Vagina (tissue), 2 donors: ENCODE measurements at regions of chr11 and their contacts with region 1.

Region 1: GRCh38 chr11:72831513-72832300 is 17.5 kb downstream of the ATG16L2 start:
- DNase-seq: peak in 1 of 2 donors; percentile 81
- H3K4me3 ChIP-seq: no peak overlapping the region
- H3K27ac ChIP-seq: peak overlapping the region; percentile 8
- H3K4me1 ChIP-seq: peaks cover 36% of the 10 kb centered on the region
- H3K27me3 ChIP-seq: no peaks in the 10 kb centered on the region
- CTCF ChIP-seq: peak; percentile 90 to 95 (median 94)
- POLR2A ChIP-seq: no peak

Region 2: DNA sequence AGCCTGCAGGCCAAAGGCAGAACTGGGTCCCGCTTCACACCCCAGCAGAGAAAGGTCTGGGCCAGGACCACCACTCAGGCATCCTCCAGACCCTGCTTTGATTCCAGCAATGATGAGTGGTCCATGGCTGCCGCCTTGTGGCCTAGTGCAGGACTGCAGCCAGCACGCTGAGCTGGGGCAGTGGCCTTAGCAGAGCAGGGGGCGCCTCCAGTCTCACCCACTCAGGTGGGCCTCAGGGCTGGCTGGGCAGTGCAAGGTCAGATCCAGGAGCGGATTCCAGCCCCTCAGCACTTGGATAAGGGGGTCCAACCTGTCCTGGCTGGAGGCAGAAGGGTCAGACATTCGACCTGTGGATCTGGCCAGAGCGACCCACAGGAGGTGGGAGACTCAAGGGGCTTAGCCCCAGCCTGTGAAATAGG is 147.9 kb before region 1 on chr11:
- intact Hi-C with region 1: no loop called
- DNase-seq: no peak
- H3K4me3 ChIP-seq: no peak overlapping the region
- H3K27ac ChIP-seq: peak overlapping the region; percentile 73
- H3K4me1 ChIP-seq: peaks cover 51% of the 10 kb centered on the region
- H3K27me3 ChIP-seq: no peaks in the 10 kb centered on the region
- CTCF ChIP-seq: peak; percentile 79 to 89 (median 88)
- POLR2A ChIP-seq: no peak

Region 3: GRCh38 chr11:73141848-73142286 is 310.2 kb after region 1 on chr11:
- intact Hi-C with region 1: loop called (anchors 10 kb)
- DNase-seq: no peak
- H3K4me3 ChIP-seq: peak overlapping the region; percentile 79 to 94
- H3K27ac ChIP-seq: peak overlapping the region; percentile 97
- H3K4me1 ChIP-seq: peaks cover 24% of the 10 kb centered on the region
- H3K27me3 ChIP-seq: no peaks in the 10 kb centered on the region
- CTCF ChIP-seq: no peak
- POLR2A ChIP-seq: peak in 1 of 2 donors; percentile 19

Region 4: DNA sequence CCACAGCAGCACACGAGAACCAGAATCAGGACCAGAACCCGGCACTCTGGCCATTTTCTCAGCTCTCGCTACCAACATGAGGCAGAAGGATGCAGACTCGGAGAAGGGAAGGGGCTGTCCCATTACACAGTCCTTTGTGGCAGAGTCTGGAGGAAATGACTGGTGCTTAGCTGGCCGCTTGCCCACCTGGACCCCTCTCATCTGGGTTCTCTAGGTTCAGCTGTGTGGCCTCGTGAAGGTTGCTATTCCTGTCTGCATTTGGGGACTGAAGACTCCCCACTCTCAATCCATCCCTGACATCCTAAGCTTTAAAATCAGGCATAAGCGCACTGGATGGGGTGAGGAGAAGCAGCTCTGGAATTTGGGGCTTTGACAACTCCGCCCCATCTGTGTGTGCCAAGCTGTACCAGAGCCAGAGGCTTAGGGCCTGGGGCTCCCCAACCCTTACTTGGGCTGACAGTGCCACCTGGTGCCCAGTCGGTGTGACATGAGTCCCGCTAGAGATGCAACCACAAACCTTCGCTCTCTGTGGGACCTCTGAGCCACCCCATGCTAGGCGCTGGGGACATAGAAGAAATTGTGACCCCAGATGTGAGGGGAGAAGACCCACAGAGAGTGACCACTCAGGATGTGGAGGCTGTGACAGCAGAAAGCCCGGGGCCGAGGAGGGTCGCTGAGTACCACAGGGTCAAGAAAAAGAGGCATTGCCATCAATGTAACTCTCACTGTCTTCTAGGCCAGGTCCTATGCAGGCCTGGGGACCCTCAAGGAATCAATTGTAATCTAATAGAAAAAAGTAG is 346.3 kb after region 1 on chr11:
- intact Hi-C with region 1: loop called (anchors 5 kb)
- DNase-seq: no peak
- H3K4me3 ChIP-seq: no peak overlapping the region
- H3K27ac ChIP-seq: peak overlapping the region; percentile 49
- H3K4me1 ChIP-seq: peaks cover 23% of the 10 kb centered on the region
- H3K27me3 ChIP-seq: no peaks in the 10 kb centered on the region
- CTCF ChIP-seq: peak; percentile 84 to 92 (median 86)
- POLR2A ChIP-seq: no peak